Activated CD4-positive, alpha-beta memory T cell treated with anti-CD3 and anti-CD28 coated beads, Interleukin-2, amount 10 ng/mL, durations not matched to agents 7 days and 5 days (primary cell): ENCODE measurements at regions of chr19 and their contacts with region 1.

Region 1: DNA sequence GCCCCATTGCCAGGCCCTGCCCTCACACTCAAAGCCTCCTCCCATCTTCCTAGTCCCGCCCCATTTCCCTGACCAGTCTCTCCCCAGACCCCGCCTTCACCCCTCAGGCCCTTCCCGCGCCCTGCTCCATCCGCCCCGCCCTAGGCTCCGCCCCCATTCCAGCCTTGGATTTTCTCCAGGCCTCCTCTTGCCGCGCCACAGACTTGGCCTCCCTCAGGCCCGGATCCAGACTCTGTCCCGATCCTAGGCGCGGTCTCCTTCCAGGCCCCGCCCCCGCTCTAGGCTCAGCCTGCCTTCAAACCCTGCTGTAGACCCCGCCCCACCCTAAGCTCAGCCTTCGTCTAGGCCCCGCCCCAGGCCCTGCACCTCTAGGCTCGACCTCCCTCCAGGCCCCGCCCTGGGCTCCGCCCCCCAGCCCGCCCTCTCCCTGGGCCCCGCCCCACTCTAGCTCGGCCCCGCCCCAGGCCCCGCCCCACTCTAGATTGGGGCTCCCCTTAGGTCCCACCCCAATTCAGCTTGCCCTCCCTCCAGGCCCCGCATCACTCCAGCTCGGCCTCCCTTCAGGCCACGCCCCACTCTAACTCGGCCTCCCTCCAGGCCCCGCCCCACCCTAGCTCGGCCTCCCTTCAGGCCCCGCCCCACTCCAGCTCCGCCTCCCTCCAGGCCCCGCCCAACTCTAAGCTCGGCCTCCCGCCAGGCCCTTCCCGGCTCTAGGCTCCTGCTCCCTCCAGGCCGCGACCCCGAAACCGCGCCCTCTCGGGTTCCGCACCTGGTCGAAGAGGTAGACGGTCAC is 18.5 kb downstream of the LMTK3 start:
- DNase-seq: peak; percentile 88
- H3K4me3 Mint-ChIP-seq: peak overlapping the region; percentile 51
- H3K27ac Mint-ChIP-seq: peak overlapping the region; percentile 35
- H3K4me1 Mint-ChIP-seq: peaks cover 46% of the 10 kb centered on the region
- H3K27me3 Mint-ChIP-seq: peaks cover 56% of the 10 kb centered on the region

Region 2: GRCh38 chr19:48480558-48481500 is 12.3 kb before region 1 on chr19:
- CTCF ChIA-PET with region 1: interaction called, 23 read pairs
- POLR2A ChIA-PET with region 1: interaction called, 11 read pairs
- DNase-seq: peak; percentile 72
- H3K4me3 Mint-ChIP-seq: peak overlapping the region; percentile 61
- H3K27ac Mint-ChIP-seq: peak overlapping the region; percentile 64
- H3K4me1 Mint-ChIP-seq: peaks cover 26% of the 10 kb centered on the region
- H3K27me3 Mint-ChIP-seq: no peaks in the 10 kb centered on the region

Region 3: GRCh38 chr19:48596679-48597465 is 103.8 kb after region 1 on chr19:
- CTCF ChIA-PET with region 1: no interaction called
- POLR2A ChIA-PET with region 1: no interaction called
- DNase-seq: peak; percentile 75
- H3K4me3 Mint-ChIP-seq: peak overlapping the region; percentile 74
- H3K27ac Mint-ChIP-seq: peak overlapping the region; percentile 85
- H3K4me1 Mint-ChIP-seq: peaks cover 39% of the 10 kb centered on the region
- H3K27me3 Mint-ChIP-seq: no peaks in the 10 kb centered on the region